B cell (primary cell): ENCODE measurements at regions of chr1 and their contacts with region 1.

Region 1: GRCh38 chr1:205523891-205524793 is 19.7 kb downstream of the CDK18 start:
- DNase-seq: peak; percentile 84
- ATAC-seq: peak; percentile 59
- H3K4me3 ChIP-seq: no peak overlapping the region
- H3K4me3 Mint-ChIP-seq: no peak overlapping the region
- H3K27ac ChIP-seq: no peak overlapping the region
- H3K27ac Mint-ChIP-seq: no peak overlapping the region
- H3K4me1 ChIP-seq: peaks cover 1 to 6% of the 10 kb centered on the region in 2 donors
- H3K4me1 Mint-ChIP-seq: peaks cover 2% of the 10 kb centered on the region
- H3K27me3 ChIP-seq: peaks cover 0 to 2% (median 0%) of the 10 kb centered on the region in 4 experiments
- H3K27me3 Mint-ChIP-seq: peaks cover 3% of the 10 kb centered on the region
- CTCF ChIP-seq: peak; percentile 78

Region 2: GRCh38 chr1:205255941-205256780 is 268.0 kb before region 1 on chr1:
- CTCF ChIA-PET with region 1: interaction called, 12 read pairs
- POLR2A ChIA-PET with region 1: no interaction called
- intact Hi-C with region 1: no loop called
- DNase-seq: peak; percentile 85
- ATAC-seq: peak; percentile 97
- H3K4me3 ChIP-seq: no peak overlapping the region
- H3K4me3 Mint-ChIP-seq: no peak overlapping the region
- H3K27ac ChIP-seq: no peak overlapping the region
- H3K27ac Mint-ChIP-seq: no peak overlapping the region
- H3K4me1 ChIP-seq: peaks cover 0 to 4% of the 10 kb centered on the region in 2 donors
- H3K4me1 Mint-ChIP-seq: no peaks in the 10 kb centered on the region
- H3K27me3 ChIP-seq: peaks cover 0 to 6% (median 0%) of the 10 kb centered on the region in 4 experiments
- H3K27me3 Mint-ChIP-seq: no peaks in the 10 kb centered on the region
- CTCF ChIP-seq: peak; percentile 93

Region 3: DNA sequence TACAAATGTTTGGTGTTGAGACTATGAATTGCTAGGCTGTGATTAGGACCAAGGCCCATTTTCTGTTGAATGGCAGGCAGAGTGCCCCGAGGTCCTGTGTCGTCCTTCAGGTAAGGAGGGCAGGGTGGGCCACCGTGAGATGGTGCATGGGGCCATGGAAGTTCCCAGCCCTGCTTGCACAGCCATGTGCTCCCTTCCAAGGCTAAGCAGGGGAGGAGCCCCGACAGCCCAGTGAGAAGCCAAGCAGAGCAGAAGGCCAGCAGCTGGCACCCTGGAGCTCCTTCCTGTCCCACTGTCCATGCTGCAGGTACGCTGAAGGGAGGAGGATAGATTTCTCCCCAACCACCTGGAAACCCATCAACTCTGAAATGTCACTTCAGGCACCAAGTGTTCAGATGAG is 194.4 kb before region 1 on chr1:
- CTCF ChIA-PET with region 1: interaction called, 110 read pairs
- POLR2A ChIA-PET with region 1: no interaction called
- intact Hi-C with region 1: no loop called
- DNase-seq: no peak
- ATAC-seq: no peak
- H3K4me3 ChIP-seq: no peak overlapping the region
- H3K4me3 Mint-ChIP-seq: no peak overlapping the region
- H3K27ac ChIP-seq: no peak overlapping the region
- H3K27ac Mint-ChIP-seq: no peak overlapping the region
- H3K4me1 ChIP-seq: peaks cover 11 to 12% of the 10 kb centered on the region in 2 donors
- H3K4me1 Mint-ChIP-seq: peaks cover 10% of the 10 kb centered on the region
- H3K27me3 ChIP-seq: peaks cover 0 to 8% (median 1%) of the 10 kb centered on the region in 4 experiments
- H3K27me3 Mint-ChIP-seq: peaks cover 14% of the 10 kb centered on the region
- CTCF ChIP-seq: no peak

Region 4: GRCh38 chr1:205354259-205354904 is 169.8 kb before region 1 on chr1:
- CTCF ChIA-PET with region 1: interaction called, 65 read pairs
- POLR2A ChIA-PET with region 1: no interaction called
- intact Hi-C with region 1: loop called (anchors 1 kb)
- DNase-seq: peak; percentile 78
- ATAC-seq: peak; percentile 58
- H3K4me3 ChIP-seq: no peak overlapping the region
- H3K4me3 Mint-ChIP-seq: no peak overlapping the region
- H3K27ac ChIP-seq: no peak overlapping the region
- H3K27ac Mint-ChIP-seq: no peak overlapping the region
- H3K4me1 ChIP-seq: peaks cover 16 to 20% of the 10 kb centered on the region in 2 donors
- H3K4me1 Mint-ChIP-seq: peaks cover 29% of the 10 kb centered on the region
- H3K27me3 ChIP-seq: peaks cover 0 to 4% (median 0%) of the 10 kb centered on the region in 4 experiments
- H3K27me3 Mint-ChIP-seq: peaks cover 19% of the 10 kb centered on the region
- CTCF ChIP-seq: peak; percentile 95

Region 5: DNA sequence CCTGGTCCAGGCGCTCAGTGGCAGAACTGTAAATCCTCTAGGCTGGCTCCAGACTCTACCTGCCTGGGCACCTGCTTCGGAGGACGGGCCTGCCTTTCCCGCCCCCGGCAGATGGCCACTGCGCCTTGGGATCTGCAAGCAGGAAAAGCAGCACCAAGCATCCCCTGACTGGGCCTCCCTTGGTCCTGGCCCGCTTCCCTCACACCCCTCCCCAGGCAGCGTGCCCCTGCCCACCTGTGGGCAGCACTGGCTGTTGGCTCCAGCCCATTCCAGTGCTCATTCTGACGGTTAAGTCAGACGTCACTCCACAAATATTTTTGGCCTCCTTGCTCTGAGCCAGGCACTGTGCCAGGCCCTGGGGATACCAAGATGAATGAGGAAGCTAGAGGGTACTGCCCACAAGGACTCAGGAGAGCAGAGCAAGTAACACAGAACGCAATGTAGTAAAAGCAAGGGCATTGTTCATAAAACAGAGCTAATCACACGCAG is 46.3 kb before region 1 on chr1:
- CTCF ChIA-PET with region 1: interaction called, 287 read pairs
- POLR2A ChIA-PET with region 1: no interaction called
- intact Hi-C with region 1: no loop called
- DNase-seq: no peak
- ATAC-seq: no peak
- H3K4me3 ChIP-seq: no peak overlapping the region
- H3K4me3 Mint-ChIP-seq: no peak overlapping the region
- H3K27ac ChIP-seq: no peak overlapping the region
- H3K27ac Mint-ChIP-seq: no peak overlapping the region
- H3K4me1 ChIP-seq: peaks cover 26 to 29% of the 10 kb centered on the region in 2 donors
- H3K4me1 Mint-ChIP-seq: peaks cover 27% of the 10 kb centered on the region
- H3K27me3 ChIP-seq: peaks cover 0 to 35% (median 10%) of the 10 kb centered on the region in 4 experiments
- H3K27me3 Mint-ChIP-seq: peaks cover 24% of the 10 kb centered on the region
- CTCF ChIP-seq: no peak

Region 6: DNA sequence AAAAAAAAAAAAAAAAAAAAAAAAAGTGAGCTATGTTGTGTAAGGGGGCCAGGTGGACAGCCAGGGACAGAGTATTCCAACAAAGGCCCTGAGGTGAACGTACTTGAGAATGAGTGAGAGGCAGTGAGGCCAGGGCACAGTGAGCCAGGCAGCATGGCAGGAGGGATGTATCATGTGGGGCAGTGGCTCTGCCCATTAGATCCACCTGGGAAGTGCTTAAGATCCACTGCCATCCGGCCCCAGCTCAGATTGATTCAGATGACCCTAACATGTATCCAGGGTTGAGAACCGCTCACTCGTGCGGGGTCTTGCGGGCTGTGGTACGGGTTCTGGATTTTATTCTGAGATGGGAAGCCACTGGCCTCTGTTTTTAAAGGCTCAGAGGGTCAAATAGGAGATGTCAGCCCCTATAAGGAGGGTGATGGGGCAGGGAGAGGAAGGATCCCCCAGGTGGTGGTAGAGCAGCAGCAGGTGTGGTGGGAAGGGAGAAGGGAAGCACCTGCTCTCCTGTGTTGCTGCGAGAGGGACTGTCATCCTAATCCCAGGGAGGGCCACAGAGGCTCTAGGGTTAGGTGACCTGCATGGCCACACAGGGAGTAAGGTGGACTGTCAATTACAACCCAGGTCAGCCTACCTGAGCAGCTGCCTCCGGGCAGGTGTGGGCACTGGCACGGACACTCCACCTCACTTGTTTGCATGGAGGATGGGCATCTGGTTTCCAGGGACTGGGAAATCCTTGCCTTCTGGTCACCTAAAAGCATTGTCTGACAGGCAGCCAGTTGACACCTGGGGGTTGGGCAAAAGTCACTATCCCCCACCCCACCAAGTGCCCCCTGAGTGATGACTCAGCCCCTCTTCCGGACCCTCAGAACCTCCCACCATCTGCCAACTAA is 12.0 kb after region 1 on chr1:
- CTCF ChIA-PET with region 1: interaction called, 29 read pairs
- POLR2A ChIA-PET with region 1: no interaction called
- intact Hi-C with region 1: no loop called
- DNase-seq: no peak
- ATAC-seq: no peak
- H3K4me3 ChIP-seq: no peak overlapping the region
- H3K4me3 Mint-ChIP-seq: peak overlapping the region; percentile 61
- H3K27ac ChIP-seq: no peak overlapping the region
- H3K27ac Mint-ChIP-seq: no peak overlapping the region
- H3K4me1 ChIP-seq: peaks cover 0 to 5% of the 10 kb centered on the region in 2 donors
- H3K4me1 Mint-ChIP-seq: peaks cover 9% of the 10 kb centered on the region
- H3K27me3 ChIP-seq: no peaks in the 10 kb centered on the region
- H3K27me3 Mint-ChIP-seq: peaks cover 13% of the 10 kb centered on the region
- CTCF ChIP-seq: no peak

Region 7: GRCh38 chr1:205711104-205712020 is 187.2 kb after region 1 on chr1:
- CTCF ChIA-PET with region 1: interaction called, 18 read pairs
- POLR2A ChIA-PET with region 1: no interaction called
- intact Hi-C with region 1: loop called (anchors 1 kb)
- DNase-seq: peak; percentile 87
- ATAC-seq: peak; percentile 96
- H3K4me3 ChIP-seq: no peak overlapping the region
- H3K4me3 Mint-ChIP-seq: no peak overlapping the region
- H3K27ac ChIP-seq: no peak overlapping the region
- H3K27ac Mint-ChIP-seq: peak overlapping the region; percentile 39
- H3K4me1 ChIP-seq: peaks cover 13 to 16% of the 10 kb centered on the region in 2 donors
- H3K4me1 Mint-ChIP-seq: peaks cover 22% of the 10 kb centered on the region
- H3K27me3 ChIP-seq: no peaks in the 10 kb centered on the region
- H3K27me3 Mint-ChIP-seq: no peaks in the 10 kb centered on the region
- CTCF ChIP-seq: peak; percentile 95

Region 8: DNA sequence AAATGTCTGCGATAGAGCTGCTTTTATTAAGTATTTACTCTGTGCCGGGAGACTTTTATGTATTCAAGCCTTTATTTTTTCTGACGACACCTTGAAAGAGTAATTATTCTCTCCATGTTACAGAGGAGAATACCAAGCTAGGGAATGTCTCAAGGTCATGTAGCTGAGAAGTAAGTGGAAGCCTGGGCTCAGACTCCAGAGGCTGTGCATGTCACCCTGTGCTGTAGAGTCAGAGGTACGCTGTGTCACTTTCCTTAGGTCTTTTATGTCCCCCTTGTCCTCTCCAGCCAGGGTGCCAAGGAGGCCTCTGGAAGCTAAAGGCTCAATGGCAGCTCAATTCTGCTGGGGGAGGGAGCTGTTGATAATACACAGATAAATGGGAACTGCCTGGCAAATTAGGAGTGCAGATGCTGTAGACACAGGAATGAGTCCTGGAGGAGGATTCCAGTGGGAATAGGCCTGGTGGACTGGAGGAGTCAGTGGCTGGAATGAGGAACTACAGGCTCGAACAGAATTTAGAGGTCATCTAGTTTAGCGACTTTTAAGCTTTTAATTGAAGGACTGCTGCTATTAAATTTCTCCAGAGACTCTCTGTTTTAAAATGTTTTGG is 1237.1 kb after region 1 on chr1:
- CTCF ChIA-PET with region 1: no interaction called
- POLR2A ChIA-PET with region 1: no interaction called
- intact Hi-C with region 1: no loop called
- DNase-seq: no peak
- ATAC-seq: no peak
- H3K4me3 ChIP-seq: no peak overlapping the region
- H3K4me3 Mint-ChIP-seq: no peak overlapping the region
- H3K27ac ChIP-seq: no peak overlapping the region
- H3K27ac Mint-ChIP-seq: no peak overlapping the region
- H3K4me1 ChIP-seq: peaks cover 13 to 16% of the 10 kb centered on the region in 2 donors
- H3K4me1 Mint-ChIP-seq: peaks cover 8% of the 10 kb centered on the region
- H3K27me3 ChIP-seq: no peaks in the 10 kb centered on the region
- H3K27me3 Mint-ChIP-seq: no peaks in the 10 kb centered on the region
- CTCF ChIP-seq: no peak